Mammary epithelial cell (primary cell): ENCODE measurements at regions of chr5 and their contacts with region 1.

Region 1: DNA sequence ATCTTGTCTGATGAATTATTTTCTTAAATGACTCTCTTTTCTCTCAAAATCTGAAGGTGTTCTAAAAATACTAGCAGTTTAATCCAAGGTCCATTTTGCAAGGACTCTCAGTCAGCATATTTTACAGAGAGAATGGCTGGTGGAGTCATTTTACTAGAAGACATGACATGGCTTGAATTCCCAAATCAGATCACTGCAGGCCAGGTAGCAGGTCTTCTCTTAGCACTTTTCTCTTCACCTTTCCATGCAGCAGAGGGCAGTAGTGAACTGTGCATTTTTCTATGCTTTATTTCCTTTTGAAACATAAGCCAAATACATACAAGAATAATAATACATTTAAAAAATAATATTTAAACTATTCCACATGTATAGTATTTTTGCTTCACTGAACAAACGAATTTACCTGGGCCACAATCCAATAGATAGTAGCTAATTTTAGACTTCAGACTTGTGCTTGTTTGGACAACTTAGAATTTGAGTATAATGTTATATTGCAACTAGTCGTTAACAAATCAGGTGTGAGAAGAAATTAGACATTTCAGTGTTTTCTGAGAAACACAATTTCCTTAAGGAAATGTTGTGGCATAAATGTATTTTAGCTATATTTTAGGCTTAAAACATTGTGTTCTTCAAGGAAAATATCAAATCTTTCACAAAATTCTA is 289.4 kb upstream of the DAB2 start:
- DNase-seq: peak; percentile 64
- H3K4me3 ChIP-seq: no peak overlapping the region
- H3K27ac ChIP-seq: no peak overlapping the region
- H3K4me1 ChIP-seq: no peaks in the 10 kb centered on the region
- H3K27me3 ChIP-seq: peaks cover under 1% of the 10 kb centered on the region
- CTCF ChIP-seq: peak; percentile 76 to 83

Region 2: GRCh38 chr5:39547553-39548154 is 166.5 kb before region 1 on chr5:
- CTCF ChIA-PET with region 1: no interaction called
- dilution Hi-C with region 1: no loop called
- in situ Hi-C with region 1: no loop called
- intact Hi-C with region 1: no loop called
- DNase-seq: peak; percentile 44
- H3K4me3 ChIP-seq: no peak overlapping the region
- H3K27ac ChIP-seq: no peak overlapping the region
- H3K4me1 ChIP-seq: peaks cover 3% of the 10 kb centered on the region
- H3K27me3 ChIP-seq: no peaks in the 10 kb centered on the region
- CTCF ChIP-seq: peak; percentile 74 to 77

Region 3: DNA sequence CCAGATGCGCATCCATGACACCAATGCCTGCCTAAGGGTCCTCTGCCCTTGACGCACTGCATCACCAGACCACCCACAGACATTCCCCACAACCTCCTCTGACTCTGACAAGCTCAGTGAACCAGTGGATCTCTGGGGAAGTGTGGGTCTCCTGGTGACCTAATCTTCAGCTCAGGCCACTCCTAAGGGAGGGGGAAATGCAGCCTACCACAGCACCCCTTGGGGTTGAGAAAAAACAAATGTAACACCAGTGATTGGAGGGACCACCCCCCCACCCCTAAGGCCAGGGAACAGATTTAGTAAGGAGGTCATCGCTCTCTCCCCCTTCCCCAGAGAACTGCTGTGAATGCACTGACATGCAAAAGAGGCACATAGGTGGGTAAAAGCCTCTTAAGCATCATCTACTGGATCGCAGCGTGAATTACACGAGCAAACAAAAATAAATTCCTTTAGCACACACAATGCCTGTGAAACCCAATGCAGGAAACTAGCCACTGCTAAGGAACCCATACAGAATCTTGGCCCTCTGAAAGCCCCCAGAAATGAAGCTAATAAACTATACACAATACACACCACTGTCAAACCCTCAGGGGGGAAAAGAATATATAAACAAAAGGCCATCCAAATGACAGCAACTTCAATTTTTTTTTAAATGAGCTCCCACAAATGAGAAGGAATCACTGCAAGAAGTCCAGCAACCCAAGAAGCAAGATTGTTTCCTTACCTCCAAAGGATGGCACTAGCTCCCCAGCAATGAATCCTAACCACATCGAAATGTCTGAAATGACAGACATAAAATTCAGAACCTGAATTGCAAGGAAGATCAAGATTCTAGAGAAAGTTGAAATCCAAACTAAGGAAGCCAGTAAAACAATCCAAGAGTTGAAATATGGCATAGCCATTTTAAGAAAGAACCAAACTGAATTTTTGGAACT is 451.9 kb after region 1 on chr5:
- CTCF ChIA-PET with region 1: no interaction called
- dilution Hi-C with region 1: no loop called
- in situ Hi-C with region 1: no loop called
- intact Hi-C with region 1: loop called (anchors 10 kb)
- DNase-seq: peak; percentile 10
- H3K4me3 ChIP-seq: no peak overlapping the region
- H3K27ac ChIP-seq: no peak overlapping the region
- H3K4me1 ChIP-seq: no peaks in the 10 kb centered on the region
- H3K27me3 ChIP-seq: no peaks in the 10 kb centered on the region
- CTCF ChIP-seq: peak; percentile 10 to 46

Region 4: DNA sequence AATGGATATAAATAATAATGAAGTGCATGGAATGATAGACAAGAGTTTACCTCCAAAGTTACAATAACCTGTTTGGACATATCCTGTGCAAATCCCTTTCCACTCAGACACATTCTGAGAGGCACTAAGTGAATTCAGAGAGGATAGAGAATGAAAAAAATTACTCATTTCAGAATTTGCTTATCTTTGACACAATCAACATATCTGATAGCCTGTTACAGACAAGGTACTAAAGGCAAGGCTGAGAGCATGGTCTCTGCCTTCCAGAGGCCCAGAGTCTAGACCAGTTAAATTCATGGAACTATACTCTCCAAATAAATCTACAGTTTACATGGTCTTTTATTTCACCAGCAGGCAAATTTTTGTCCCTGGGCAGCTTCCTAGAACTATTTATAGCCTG is 593.8 kb after region 1 on chr5:
- CTCF ChIA-PET with region 1: no interaction called
- dilution Hi-C with region 1: loop called (anchors 25 kb)
- in situ Hi-C with region 1: no loop called
- intact Hi-C with region 1: no loop called
- DNase-seq: no peak
- H3K4me3 ChIP-seq: no peak overlapping the region
- H3K27ac ChIP-seq: no peak overlapping the region
- H3K4me1 ChIP-seq: no peaks in the 10 kb centered on the region
- H3K27me3 ChIP-seq: peaks cover 2% of the 10 kb centered on the region
- CTCF ChIP-seq: no peak